ENCODE measurements at regions of chr7 and their contacts with region 1.

Region 1: DNA sequence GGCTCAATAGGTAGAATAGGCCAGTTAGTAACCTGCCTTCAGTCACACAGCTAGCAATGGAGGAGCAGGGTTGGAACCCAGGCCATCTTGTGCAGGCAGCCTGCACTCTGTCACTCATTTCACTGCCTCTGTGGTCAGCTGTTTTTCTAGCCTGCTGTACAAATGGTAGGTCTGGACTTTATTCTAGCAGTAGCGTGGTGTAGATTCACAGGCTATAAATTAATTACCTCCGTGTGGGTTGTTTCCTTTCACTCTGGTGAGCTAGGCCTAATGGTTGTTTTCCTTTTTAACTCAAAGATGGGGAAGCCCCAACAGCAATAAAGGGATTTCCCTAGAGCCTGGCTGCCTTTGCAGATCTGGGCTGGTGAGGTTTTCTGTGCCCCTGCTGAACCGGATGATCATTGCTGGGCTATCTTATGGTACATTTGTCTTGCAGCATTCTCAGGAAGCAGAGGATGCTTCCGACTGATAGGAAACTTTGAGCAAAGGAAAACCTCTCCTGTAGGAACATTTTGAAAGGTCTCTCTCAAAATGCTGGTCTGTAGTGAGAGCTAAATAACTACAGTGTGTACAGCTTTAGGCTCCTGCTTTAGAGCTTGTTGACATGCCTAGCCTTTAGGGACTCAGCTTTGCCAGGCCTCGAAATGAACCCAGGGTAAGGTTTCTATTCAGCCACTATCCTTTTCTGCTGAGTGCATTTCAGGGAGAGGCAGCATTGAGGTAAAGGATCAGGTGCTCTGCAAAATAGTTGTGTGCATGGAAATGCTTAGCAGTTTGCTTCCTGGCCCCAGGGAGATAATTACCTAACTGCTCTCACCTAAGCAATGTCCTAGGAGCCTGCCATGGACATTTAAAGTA is 157.4 kb downstream of the ST7 start:
- DNase-seq: peak; percentile 75
- H3K4me3 Mint-ChIP-seq: peak overlapping the region; percentile 27
- H3K27ac Mint-ChIP-seq: peak overlapping the region; percentile 24
- H3K4me1 Mint-ChIP-seq: peaks cover 34% of the 10 kb centered on the region
- H3K27me3 Mint-ChIP-seq: no peaks in the 10 kb centered on the region

Region 2: GRCh38 chr7:116953727-116954442 is 156.8 kb before region 1 on chr7:
- CTCF ChIA-PET with region 1: no interaction called
- intact Hi-C with region 1: loop called (anchors 1 kb)
- DNase-seq: peak; percentile 40
- H3K4me3 Mint-ChIP-seq: peak overlapping the region; percentile 92
- H3K27ac Mint-ChIP-seq: peak overlapping the region; percentile 87
- H3K4me1 Mint-ChIP-seq: peaks cover 21% of the 10 kb centered on the region
- H3K27me3 Mint-ChIP-seq: no peaks in the 10 kb centered on the region

Region 3: GRCh38 chr7:117051808-117052207 is 58.9 kb before region 1 on chr7:
- CTCF ChIA-PET with region 1: no interaction called
- intact Hi-C with region 1: loop called (anchors 5 kb)
- DNase-seq: no peak
- H3K4me3 Mint-ChIP-seq: no peak overlapping the region
- H3K27ac Mint-ChIP-seq: no peak overlapping the region
- H3K4me1 Mint-ChIP-seq: peaks cover 34% of the 10 kb centered on the region
- H3K27me3 Mint-ChIP-seq: no peaks in the 10 kb centered on the region

Region 4: DNA sequence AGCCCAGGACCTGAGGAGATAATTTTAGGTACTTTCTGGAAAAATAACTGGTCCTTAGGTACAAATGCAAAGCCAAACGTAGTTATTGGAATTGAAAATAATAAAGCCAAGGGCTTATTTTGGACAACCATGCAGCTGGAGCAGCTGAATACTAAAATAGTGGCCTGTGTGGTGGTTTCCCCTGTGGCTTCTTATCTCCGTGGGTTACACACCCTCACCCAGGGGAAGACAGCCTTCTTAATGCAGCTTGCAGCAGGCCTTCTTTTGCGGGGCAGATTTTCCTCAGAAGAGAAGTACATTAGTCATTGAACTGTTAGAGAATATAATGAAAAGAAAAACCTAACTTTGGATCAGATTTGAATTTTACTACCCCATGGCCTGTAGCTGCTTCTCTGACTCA is 23.9 kb before region 1 on chr7:
- CTCF ChIA-PET with region 1: no interaction called
- intact Hi-C with region 1: loop called (anchors 1 kb)
- DNase-seq: no peak
- H3K4me3 Mint-ChIP-seq: no peak overlapping the region
- H3K27ac Mint-ChIP-seq: no peak overlapping the region
- H3K4me1 Mint-ChIP-seq: peaks cover 21% of the 10 kb centered on the region
- H3K27me3 Mint-ChIP-seq: no peaks in the 10 kb centered on the region

Region 5: GRCh38 chr7:117827862-117828261 is 717.2 kb after region 1 on chr7:
- CTCF ChIA-PET with region 1: no interaction called
- intact Hi-C with region 1: no loop called
- DNase-seq: no peak
- H3K4me3 Mint-ChIP-seq: no peak overlapping the region
- H3K27ac Mint-ChIP-seq: no peak overlapping the region
- H3K4me1 Mint-ChIP-seq: no peaks in the 10 kb centered on the region
- H3K27me3 Mint-ChIP-seq: no peaks in the 10 kb centered on the region